Endothelial cell of umbilical vein (primary cell): ENCODE measurements at regions of chr1 and their contacts with region 1.

Region 1: DNA sequence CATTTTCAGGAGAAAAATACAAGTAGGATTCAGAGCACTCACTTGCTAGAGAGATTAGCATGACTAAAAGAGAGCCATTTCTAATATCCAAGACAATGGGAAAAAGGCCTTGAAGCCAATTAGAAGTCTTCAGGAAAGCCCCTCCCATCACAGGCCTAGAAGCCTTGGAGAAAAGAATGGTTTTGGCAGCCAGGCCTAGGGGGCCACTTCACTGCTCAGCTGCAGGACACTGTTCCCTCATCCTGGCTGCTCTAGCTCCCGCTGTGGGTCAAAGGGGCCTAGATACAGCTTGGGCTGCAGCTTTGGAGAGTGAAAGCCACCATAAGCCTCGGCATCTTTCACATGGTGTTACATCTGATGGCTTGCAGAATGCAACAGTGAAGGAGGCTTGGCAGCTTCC is 62.8 kb downstream of the RGS4 start:
- DNase-seq: no peak
- H3K4me3 ChIP-seq: no peak overlapping the region
- H3K27ac ChIP-seq: no peak overlapping the region
- H3K4me1 ChIP-seq: no peaks in the 10 kb centered on the region
- H3K27me3 ChIP-seq: no peaks in the 10 kb centered on the region
- CTCF ChIP-seq: no peak
- POLR2A ChIP-seq: no peak

Region 2: DNA sequence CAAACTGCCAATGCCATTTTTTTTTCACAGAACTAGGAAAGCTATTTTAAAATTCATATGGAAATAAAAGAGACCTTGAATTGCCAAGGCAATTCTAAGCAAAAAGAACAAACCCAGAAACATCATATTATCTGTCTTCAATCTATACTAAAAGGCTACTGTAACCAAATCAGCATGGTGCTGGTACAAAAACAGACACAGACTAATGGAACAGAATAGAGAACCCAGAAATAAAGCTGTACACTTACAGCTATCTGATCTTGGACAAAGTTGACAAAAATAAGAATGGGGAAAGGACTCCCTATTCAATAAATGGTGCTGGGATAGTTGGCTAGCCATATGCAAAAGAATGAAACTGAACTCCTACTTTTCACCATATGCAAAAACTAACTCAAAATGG is 12.3 kb before region 1 on chr1:
- CTCF ChIA-PET with region 1: interaction called, 3 read pairs
- POLR2A ChIA-PET with region 1: no interaction called
- dilution Hi-C with region 1: no loop called
- intact Hi-C with region 1: loop called (anchors 2 kb)
- DNase-seq: no peak
- H3K4me3 ChIP-seq: no peak overlapping the region
- H3K27ac ChIP-seq: no peak overlapping the region
- H3K4me1 ChIP-seq: peaks cover 7% of the 10 kb centered on the region
- H3K27me3 ChIP-seq: no peaks in the 10 kb centered on the region
- CTCF ChIP-seq: no peak
- POLR2A ChIP-seq: no peak